Activated CD8-positive, alpha-beta T cell treated with anti-CD3 and anti-CD28 coated beads, Interleukin-2, amount 10 ng/mL, durations not matched to agents 7 days and 5 days (primary cell): ENCODE measurements at regions of chr4 and their contacts with region 1.

Region 1: GRCh38 chr4:56977321-56978012 is at the start of gene NOA1:
- DNase-seq: peak; percentile 98
- ATAC-seq: peak; percentile 87
- H3K4me3 Mint-ChIP-seq: peak within 1 kb of the TSS; percentile 92
- H3K27ac Mint-ChIP-seq: peak within 1 kb of the TSS; percentile 97
- H3K4me1 Mint-ChIP-seq: peaks cover 45% of the 10 kb centered on the region
- H3K27me3 Mint-ChIP-seq: no peaks in the 10 kb centered on the region
- total RNA-seq, gene NOA1: 19.1 to 21.9 TPM

Region 2: DNA sequence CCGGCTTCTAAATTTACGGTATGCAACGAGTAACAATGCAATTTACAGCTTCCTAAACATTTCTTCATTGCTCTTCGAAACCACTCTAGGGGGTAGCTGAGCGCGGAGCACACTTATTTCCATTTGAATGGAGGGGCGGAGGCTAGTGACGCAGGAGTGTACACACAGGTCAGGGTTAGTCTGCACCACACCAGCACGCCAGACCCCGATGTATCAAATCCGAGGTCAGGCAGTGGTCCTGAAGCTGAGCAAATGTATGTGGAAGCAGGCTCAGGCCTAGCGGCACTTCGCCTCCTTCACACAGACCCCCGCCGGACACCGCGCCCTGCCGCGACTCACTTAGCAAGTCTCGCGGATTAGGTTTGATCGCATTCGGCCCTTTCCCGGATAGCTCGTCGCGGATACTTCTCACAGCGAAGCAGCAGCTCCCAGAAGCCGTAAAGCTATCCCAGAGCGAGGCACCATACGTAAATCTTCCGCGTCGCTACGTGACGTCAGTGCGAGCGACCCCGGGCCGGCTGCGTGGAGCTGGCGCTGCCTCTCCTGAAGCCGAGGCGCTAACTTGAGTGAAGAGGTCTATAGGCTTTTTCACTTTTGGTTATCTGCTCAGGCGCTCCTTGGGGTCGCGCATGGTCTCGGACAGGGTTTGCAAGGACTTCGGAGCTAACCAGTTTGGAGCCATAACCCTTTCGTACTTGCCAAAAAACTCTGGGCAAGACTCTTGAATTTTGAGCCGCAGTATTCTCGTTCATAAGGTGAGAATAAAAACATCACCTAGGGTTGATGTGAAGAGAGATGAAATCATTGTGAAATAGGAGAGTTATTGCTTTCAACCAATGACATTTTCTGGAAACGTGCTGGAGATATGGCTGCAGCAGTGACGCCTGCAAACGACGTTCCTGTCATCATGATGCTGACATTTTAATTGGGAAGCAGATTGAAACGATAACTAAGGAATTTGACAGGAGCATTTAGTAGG is 590.2 kb before region 1 on chr4 and contains the start of gene AASDH:
- CTCF ChIA-PET with region 1: interaction called, 4 read pairs
- POLR2A ChIA-PET with region 1: interaction called, 23 read pairs
- DNase-seq: peak; percentile 96
- ATAC-seq: peak; percentile 95
- H3K4me3 Mint-ChIP-seq: peak within 1 kb of the TSS; percentile 94
- H3K27ac Mint-ChIP-seq: peak within 1 kb of the TSS; percentile 97
- H3K4me1 Mint-ChIP-seq: peaks cover 36% of the 10 kb centered on the region
- H3K27me3 Mint-ChIP-seq: no peaks in the 10 kb centered on the region
- total RNA-seq, gene AASDH: 8.5 to 9.9 TPM

Region 3: DNA sequence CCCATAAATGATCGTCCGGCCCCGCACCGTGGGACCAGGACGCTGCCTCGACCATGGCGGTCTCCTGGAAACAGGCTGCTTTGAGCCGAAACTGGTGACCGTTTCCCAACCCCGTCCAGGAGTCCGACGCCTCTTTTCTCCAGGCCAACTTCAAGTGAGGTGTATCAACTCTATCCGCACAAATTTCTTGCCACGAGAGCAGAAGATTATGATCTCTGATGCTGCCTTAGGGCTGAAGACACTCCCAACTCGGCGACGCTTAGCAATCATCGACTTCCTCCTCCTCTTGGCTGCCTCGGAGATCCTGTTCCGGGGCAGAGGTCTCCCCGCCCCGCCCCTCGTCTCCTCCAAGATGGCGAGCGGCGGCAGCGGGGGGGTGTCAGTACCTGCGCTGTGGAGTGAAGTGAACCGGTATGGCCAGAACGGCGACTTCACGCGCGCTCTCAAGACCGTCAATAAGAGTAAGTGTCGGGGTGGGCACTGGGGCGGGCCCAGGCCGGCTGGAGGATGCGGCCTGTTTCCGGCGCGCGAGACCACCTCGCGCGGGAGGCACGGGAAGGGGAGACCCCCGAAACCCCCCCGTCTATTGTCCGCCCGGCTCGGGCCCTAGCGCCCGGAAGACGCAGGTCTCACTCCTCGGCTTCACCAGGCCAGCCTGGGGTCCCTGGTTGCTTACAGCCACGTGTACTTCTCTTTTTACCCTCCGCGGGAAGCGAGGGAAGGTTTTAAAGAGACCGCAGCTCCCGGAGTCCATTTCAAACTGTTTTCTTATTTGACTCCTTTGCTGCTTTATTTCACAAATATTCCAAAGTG is 510.0 kb before region 1 on chr4 and contains the start of gene SRP72:
- CTCF ChIA-PET with region 1: no interaction called
- POLR2A ChIA-PET with region 1: interaction called, 10 read pairs
- DNase-seq: peak; percentile 94
- ATAC-seq: peak; percentile 94
- H3K4me3 Mint-ChIP-seq: peak within 1 kb of the TSS; percentile 100
- H3K27ac Mint-ChIP-seq: peak within 1 kb of the TSS; percentile 100
- H3K4me1 Mint-ChIP-seq: peaks cover 41% of the 10 kb centered on the region
- H3K27me3 Mint-ChIP-seq: no peaks in the 10 kb centered on the region
- total RNA-seq, gene SRP72: 131 to 132 TPM

Region 4: DNA sequence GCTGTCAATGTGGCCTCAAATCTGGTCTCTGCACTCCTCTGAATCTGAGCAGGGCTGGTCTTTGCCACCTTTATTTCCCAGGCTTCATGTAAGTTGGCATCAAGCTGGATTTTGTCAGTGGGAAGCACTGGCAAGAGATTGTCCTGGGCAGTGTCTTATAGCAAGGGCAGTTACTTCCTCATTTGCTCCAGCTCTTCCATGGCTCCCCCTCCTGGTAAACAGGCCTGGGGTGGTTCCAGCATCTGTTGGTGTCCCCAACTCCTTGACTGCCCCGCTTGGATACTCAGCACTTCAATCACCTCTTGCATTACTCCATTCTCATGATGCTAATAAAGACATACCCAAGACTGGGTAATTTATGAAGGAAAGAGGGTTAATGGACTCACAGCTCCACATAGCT is 84.8 kb before region 1 on chr4:
- CTCF ChIA-PET with region 1: no interaction called
- POLR2A ChIA-PET with region 1: no interaction called
- DNase-seq: no peak
- ATAC-seq: no peak
- H3K4me3 Mint-ChIP-seq: no peak overlapping the region
- H3K27ac Mint-ChIP-seq: no peak overlapping the region
- H3K4me1 Mint-ChIP-seq: no peaks in the 10 kb centered on the region
- H3K27me3 Mint-ChIP-seq: peaks cover 8% of the 10 kb centered on the region

Region 5: GRCh38 chr4:56907489-56908205 is 69.8 kb before region 1 on chr4 and contains the start of gene REST:
- CTCF ChIA-PET with region 1: interaction called, 25 read pairs
- POLR2A ChIA-PET with region 1: interaction called, 90 read pairs
- DNase-seq: peak; percentile 82
- ATAC-seq: peak; percentile 67
- H3K4me3 Mint-ChIP-seq: peak within 1 kb of the TSS; percentile 91
- H3K27ac Mint-ChIP-seq: peak within 1 kb of the TSS; percentile 79
- H3K4me1 Mint-ChIP-seq: peaks cover 37% of the 10 kb centered on the region
- H3K27me3 Mint-ChIP-seq: peaks cover 8% of the 10 kb centered on the region
- total RNA-seq, gene REST: 45.1 to 46.1 TPM

Region 6: DNA sequence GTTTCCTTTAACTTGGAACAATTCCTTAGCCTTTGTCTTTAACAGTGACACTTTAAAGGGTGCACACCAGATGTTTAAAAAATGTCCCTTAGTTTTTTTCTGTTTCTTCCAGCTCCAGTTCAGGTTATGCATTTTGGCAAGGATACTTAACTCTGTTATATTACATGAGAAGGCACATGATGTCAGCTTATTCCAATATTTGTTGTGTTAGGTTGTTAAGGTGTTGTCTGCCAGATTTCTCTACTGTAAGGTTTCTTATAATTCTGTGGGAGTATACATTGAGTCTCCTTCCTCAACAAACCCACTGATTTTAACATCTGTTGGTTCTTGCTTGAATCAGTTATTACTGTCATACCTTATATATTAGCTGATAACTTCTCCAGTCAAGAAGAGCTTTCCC is 36.5 kb before region 1 on chr4:
- CTCF ChIA-PET with region 1: no interaction called
- POLR2A ChIA-PET with region 1: no interaction called
- DNase-seq: no peak
- ATAC-seq: no peak
- H3K4me3 Mint-ChIP-seq: no peak overlapping the region
- H3K27ac Mint-ChIP-seq: no peak overlapping the region
- H3K4me1 Mint-ChIP-seq: no peaks in the 10 kb centered on the region
- H3K27me3 Mint-ChIP-seq: no peaks in the 10 kb centered on the region

Region 7: DNA sequence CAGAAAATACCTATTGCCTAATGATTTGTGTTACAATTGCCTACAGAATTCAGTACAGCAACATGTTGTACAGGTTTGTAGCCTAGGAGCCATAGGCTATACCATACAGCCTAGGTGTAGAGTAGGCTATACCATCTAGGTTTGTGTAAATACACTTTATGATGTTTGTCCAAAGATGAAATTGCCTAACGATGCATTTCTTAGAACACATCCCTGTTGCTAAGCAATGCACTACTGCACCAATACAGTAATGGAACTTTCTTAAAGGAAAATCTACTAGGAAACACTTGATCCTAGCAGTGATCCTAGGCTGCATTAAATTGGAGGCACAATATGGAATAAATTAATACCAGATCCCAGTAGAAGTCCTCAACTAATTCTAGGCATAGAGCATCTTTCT is 18.4 kb before region 1 on chr4:
- CTCF ChIA-PET with region 1: interaction called, 21 read pairs
- POLR2A ChIA-PET with region 1: interaction called, 16 read pairs
- DNase-seq: no peak
- ATAC-seq: no peak
- H3K4me3 Mint-ChIP-seq: no peak overlapping the region
- H3K27ac Mint-ChIP-seq: no peak overlapping the region
- H3K4me1 Mint-ChIP-seq: no peaks in the 10 kb centered on the region
- H3K27me3 Mint-ChIP-seq: no peaks in the 10 kb centered on the region

Region 8: DNA sequence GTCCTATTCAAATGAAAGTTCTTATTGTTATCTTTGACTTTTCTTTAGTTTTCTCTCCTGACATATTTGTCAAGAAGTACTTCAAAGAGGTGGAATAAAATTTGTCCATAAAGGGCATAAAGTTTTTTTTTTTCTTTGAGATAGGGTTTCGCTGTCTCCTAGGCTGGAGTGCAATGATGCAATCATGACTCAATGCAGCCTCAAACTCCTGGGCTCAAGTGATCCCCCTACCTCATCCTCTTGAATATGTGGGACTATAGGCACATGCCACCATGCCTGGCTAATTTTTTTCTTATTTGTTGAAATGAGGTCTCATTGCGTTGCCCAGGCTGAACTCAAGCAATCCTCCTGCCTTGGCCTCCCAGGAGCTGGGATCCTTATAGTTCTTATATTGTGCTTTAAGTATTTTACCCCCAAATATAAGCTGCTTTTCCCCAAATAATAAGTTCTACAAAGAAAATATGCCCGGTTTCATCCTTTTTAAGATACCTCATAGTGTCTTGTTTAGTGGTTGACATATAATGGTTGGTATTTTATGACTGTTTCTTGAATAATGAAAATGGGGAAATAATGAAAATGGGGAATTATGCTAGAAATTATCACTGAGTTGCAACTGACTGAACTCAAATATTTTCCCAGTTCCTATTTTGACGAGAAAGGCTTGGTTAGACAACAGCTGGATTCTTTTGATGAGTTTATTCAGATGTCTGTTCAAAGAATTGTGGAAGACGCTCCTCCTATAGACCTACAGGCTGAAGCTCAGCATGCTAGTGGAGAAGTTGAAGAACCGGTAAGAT is 12.8 kb after region 1 on chr4:
- CTCF ChIA-PET with region 1: interaction called, 15 read pairs
- POLR2A ChIA-PET with region 1: interaction called, 17 read pairs
- DNase-seq: no peak
- ATAC-seq: no peak
- H3K4me3 Mint-ChIP-seq: no peak overlapping the region
- H3K27ac Mint-ChIP-seq: no peak overlapping the region
- H3K4me1 Mint-ChIP-seq: peaks cover 16% of the 10 kb centered on the region
- H3K27me3 Mint-ChIP-seq: no peaks in the 10 kb centered on the region

Region 9: DNA sequence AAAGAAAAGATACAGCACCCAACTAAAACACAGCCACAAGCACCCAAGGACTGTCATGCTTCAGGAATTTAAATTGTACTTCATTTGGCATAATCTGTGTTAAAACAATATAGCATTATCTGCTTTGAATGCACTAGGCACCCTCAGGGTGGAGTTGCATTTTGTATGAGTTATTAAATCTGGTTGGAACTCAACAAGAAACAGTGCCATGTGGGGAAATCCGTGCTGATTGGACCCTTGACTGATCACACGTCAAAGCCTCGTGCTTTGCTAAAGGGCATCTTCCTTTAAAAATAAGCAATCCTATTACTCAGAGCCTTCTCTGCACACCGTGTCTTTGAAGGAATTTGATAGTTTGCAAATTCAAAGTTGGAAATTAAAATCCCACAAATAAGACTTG is 97.3 kb after region 1 on chr4:
- CTCF ChIA-PET with region 1: no interaction called
- POLR2A ChIA-PET with region 1: no interaction called
- DNase-seq: no peak
- ATAC-seq: no peak
- H3K4me3 Mint-ChIP-seq: no peak overlapping the region
- H3K27ac Mint-ChIP-seq: no peak overlapping the region
- H3K4me1 Mint-ChIP-seq: no peaks in the 10 kb centered on the region
- H3K27me3 Mint-ChIP-seq: peaks cover 13% of the 10 kb centered on the region